Psoas muscle (tissue), 8 donors: ENCODE measurements at regions of chr12 and their contacts with region 1.

Region 1: DNA sequence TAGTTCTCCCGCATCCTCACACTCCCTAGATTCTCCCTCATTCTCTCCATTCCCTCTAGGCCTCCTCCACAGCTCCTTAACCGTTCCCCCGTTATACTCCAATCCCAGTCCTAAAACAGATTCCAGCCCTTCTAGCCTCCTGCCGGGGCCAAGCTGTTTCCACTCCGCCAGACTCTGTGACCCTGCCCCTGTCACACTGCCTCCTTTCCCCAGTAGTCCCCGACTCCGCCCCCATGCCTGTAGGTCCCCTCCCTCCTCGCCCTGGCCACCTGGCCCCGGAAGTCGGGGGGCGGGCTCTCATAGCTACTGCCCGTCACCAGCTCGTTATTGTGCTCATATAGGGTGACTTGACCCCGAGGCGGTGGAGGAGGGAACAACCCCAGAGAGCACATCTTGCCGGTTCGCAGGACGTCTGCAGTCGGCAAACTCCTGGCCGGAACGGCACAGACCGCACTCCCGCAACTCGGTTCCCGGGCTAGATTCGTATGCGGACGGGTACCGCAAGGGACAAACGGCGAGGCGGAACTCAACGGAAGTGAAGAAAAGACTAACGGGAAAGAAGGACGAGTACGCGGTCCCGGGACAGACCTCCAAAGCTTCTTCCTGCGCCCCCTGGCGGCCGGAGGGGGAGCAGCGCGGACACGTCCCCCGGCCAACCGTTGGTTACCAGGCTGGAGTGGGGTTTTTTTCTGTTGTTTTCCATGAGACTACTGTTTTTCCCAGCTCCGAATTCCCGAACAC is at the start of gene AAAS:
- DNase-seq: peak; percentile 97 to 98
- ATAC-seq: peak; percentile 87 to 91 (median 88)
- H3K4me3 ChIP-seq: peak within 1 kb of the TSS; percentile 85
- H3K27ac ChIP-seq: peak within 1 kb of the TSS; percentile 93
- H3K4me1 ChIP-seq: peaks cover 26% of the 10 kb centered on the region
- H3K27me3 ChIP-seq: no peaks in the 10 kb centered on the region
- CTCF ChIP-seq: peak; percentile 99
- total RNA-seq, gene AAAS: 29.0 to 35.7 (median 31.5) TPM

Region 2: DNA sequence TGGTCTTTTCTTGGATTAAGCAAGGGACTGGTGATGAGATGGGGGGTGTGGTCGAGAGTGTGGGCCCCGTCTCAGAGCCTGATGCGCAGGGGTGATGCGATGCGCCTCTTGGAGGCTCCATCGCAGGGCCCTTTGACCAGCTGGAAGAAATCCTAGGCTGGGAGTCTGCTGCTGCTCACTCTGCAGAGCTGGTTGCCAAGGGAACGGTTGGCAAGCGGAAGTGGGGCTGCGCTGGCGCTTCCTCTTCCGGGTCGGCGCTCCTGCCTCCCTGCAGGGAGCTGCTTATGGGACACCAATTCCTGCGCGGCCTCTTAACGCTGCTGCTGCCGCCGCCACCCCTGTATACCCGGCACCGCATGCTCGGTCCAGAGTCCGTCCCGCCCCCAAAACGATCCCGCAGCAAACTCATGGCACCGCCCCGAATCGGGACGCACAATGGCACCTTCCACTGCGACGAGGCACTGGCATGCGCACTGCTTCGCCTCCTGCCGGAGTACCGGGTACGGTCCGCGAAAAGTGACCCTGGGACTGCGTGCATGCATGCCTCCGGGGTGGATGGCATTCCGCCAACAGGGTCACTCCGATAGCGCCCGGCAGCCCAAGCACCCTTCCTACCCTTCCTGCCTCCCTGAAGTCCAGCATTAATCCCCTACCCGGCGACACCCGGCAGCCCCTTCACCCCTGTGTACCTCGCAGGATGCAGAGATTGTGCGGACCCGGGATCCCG is 21.6 kb before region 1 on chr12 and contains the start of gene MYG1:
- intact Hi-C with region 1: loop called in 1 of 2 experiments (anchors 2 kb)
- DNase-seq: peak; percentile 88 to 93
- ATAC-seq: peak; percentile 78 to 86 (median 82)
- H3K4me3 ChIP-seq: peak within 1 kb of the TSS; percentile 95
- H3K27ac ChIP-seq: peak within 1 kb of the TSS; percentile 77
- H3K4me1 ChIP-seq: peaks cover 34% of the 10 kb centered on the region
- H3K27me3 ChIP-seq: no peaks in the 10 kb centered on the region
- CTCF ChIP-seq: no peak
- total RNA-seq, gene MYG1: 43.1 to 51.4 (median 44.5) TPM

Region 3: DNA sequence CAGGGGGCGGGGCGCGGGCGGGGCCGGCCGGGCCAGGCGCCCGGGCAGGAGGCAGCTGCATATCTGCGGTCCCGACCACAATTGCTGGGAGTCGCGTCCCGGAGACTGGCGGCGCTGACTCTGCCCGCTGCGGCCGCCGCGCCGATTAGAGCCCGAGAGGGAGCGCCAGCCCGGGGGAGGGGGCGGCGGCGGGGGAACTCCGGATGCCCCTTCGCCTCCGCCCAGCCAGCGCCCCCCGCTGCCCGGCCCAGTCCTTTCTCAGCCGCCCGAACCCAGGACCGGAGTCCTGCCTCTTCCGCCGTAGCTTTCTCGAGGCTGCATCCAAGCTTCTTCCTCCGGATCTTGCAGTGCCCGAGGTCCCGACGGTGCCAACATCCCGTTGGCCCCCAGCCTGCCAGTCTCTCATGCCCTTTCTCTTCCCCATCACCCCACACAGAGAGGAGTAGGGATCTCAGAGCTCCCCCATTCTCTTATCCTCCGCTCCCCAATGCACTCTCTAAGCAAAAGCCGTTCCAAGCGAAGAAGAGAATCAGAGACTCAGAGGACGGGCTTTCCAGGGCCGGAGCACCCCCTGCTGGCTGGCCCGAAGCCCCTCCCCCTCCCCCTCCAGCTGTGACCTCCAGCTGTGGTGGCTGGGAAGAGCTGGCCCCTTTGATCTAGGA is 23.7 kb after region 1 on chr12:
- intact Hi-C with region 1: loop called in 1 of 2 experiments (anchors 2 kb)
- DNase-seq: peak; percentile 79 to 88
- ATAC-seq: peak; percentile 87 to 97 (median 91)
- H3K4me3 ChIP-seq: peak overlapping the region; percentile 70
- H3K27ac ChIP-seq: peak overlapping the region; percentile 61
- H3K4me1 ChIP-seq: peaks cover 4% of the 10 kb centered on the region
- H3K27me3 ChIP-seq: no peaks in the 10 kb centered on the region
- CTCF ChIP-seq: peak; percentile 68

Region 4: GRCh38 chr12:53500776-53501614 is 179.8 kb after region 1 on chr12 and contains the start of gene TARBP2:
- intact Hi-C with region 1: loop called in 1 of 2 experiments (anchors 2 kb)
- DNase-seq: peak; percentile 97 to 98
- ATAC-seq: peak; percentile 87 to 89 (median 88)
- H3K4me3 ChIP-seq: peak within 1 kb of the TSS; percentile 85
- H3K27ac ChIP-seq: peak within 1 kb of the TSS; percentile 96
- H3K4me1 ChIP-seq: peaks cover 20% of the 10 kb centered on the region
- H3K27me3 ChIP-seq: no peaks in the 10 kb centered on the region
- CTCF ChIP-seq: no peak
- total RNA-seq, gene TARBP2: 7.6 to 10.8 (median 10.4) TPM